ENCODE measurements at regions of chr17 and their contacts with region 1.

Region 1: GRCh38 chr17:41548844-41549595 is 20.9 kb upstream of the KRT19 start:
- H3K4me3 ChIP-seq: no peak overlapping the region
- H3K27ac ChIP-seq: peak overlapping the region; percentile 38
- H3K4me1 ChIP-seq: no peaks in the 10 kb centered on the region
- CTCF ChIP-seq: peak; percentile 80

Region 2: DNA sequence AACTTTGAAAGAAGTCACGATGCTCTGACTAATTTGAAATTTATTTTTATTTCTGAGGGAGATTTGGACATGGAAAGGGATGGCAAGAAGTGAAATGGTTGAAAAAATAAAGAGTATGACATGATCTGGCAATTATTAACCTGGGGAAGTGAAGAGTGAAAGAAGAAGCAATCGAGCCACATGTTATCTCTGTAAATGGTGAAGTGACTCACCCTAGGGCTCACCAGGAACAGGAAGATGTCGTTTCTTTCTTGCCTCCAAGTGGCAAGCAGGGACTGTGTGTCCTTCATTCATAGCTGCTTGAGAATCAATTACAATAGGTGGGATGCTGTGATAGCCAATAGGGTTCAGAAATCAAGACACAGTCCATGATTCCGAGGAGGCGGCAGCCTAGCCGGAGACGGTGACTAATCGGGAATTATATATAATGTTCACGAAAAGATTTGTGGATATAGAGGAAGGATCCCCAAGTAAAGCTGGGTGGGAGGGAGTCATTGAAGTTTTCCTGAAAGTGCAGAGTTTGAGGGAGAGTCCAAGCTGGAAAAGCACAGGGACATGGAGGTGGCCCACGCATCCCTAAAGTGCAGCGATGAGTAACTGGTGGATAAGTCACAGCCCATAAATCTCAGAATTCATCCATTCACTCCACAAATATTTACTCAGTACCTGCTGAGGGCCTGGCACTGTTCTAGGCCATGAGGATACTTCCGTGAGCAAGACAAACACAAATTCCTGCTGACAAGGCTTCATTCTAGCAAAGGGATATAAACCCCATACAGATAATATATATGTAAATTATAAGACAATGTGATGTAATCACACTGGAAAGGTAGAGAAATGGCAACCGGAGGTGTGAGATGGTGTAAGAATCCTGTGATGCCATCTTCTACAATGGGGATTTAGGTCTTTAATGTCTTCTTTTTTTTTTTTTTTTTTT is 645.6 kb before region 1 on chr17:
- CTCF ChIA-PET with region 1: interaction called, 25 read pairs
- POLR2A ChIA-PET with region 1: no interaction called
- H3K4me3 ChIP-seq: no peak overlapping the region
- H3K27ac ChIP-seq: peak overlapping the region; percentile 63
- H3K4me1 ChIP-seq: peaks cover 27% of the 10 kb centered on the region
- CTCF ChIP-seq: no peak

Region 3: GRCh38 chr17:41307648-41308047 is 241.4 kb before region 1 on chr17:
- CTCF ChIA-PET with region 1: no interaction called
- POLR2A ChIA-PET with region 1: no interaction called
- H3K4me3 ChIP-seq: no peak overlapping the region
- H3K27ac ChIP-seq: no peak overlapping the region
- H3K4me1 ChIP-seq: no peaks in the 10 kb centered on the region
- CTCF ChIP-seq: no peak

Region 4: DNA sequence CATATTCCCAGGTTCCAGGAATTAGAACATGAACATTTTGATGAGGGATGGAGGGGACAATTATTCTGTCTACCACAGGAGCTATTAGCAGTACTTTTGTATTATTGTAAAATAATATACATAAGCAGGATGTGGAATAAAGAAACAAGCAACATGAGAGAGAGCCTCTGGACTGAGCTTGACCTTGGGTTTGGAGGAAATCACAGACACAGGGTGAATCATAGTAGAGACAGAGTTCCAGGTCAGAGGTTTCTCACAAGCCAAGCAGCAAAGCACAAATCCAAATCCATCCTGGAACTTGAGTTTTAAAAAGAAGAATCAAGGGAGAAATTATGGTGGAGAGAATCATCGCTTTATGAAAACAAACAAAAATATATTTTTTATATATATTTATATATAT is 156.7 kb before region 1 on chr17:
- CTCF ChIA-PET with region 1: interaction called, 13 read pairs
- POLR2A ChIA-PET with region 1: no interaction called
- H3K4me3 ChIP-seq: no peak overlapping the region
- H3K27ac ChIP-seq: no peak overlapping the region
- H3K4me1 ChIP-seq: peaks cover 2% of the 10 kb centered on the region; the same call in 1 of the 2 replicates
- CTCF ChIP-seq: no peak

Region 5: GRCh38 chr17:41505809-41506731 is 43.0 kb before region 1 on chr17:
- CTCF ChIA-PET with region 1: interaction called, 47 read pairs
- POLR2A ChIA-PET with region 1: no interaction called
- H3K4me3 ChIP-seq: no peak overlapping the region
- H3K27ac ChIP-seq: no peak overlapping the region
- H3K4me1 ChIP-seq: peaks cover 19% of the 10 kb centered on the region
- CTCF ChIP-seq: no peak

Region 6: GRCh38 chr17:41559548-41559947 is 10.5 kb after region 1 on chr17:
- CTCF ChIA-PET with region 1: interaction called, 75 read pairs
- POLR2A ChIA-PET with region 1: no interaction called
- H3K4me3 ChIP-seq: no peak overlapping the region
- H3K27ac ChIP-seq: no peak overlapping the region
- H3K4me1 ChIP-seq: no peaks in the 10 kb centered on the region
- CTCF ChIP-seq: no peak

Region 7: DNA sequence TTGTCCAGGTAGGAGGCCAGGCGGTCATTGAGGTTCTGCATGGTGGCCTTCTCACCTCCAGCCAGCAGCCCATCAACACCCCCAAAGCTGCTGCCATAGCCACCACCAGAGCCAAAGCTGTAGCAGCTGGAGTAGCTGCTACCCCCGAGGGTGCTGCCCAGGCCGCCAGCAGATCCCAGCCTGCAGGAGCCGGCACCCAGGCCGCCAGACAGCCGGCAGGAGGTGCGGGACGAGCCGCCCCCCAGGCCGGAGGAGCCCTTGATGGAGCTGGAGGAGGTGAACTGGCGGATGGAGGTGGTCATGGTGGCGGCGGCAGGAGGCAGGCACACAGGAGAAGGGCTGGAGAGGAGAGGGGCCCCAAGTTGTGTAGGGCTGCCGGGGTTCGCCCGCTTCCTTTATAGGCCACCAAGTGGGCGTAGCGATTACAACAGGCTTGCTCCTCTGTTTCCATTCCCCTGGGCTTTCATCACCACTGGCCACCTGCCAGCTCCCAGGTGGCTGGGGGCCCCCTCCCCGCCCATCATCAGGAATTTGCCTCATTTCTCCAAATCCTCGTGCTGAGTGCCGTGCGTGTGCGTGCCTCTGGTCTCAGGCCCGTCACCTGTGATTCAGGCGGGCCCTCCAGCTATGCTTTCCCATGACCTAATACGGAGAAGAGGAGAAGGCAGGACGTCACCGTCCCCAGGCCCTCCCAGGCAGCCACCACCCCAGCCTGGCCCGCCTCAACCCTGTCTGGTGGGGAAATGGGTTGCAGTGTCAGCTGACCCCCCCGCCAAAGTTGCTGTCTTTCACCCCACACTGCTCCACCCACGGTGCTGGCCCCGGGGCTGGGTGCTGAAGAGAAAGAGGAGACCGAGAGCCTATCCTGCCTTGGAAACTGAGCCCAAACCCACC is 75.4 kb after region 1 on chr17 and contains the start of gene KRT17:
- CTCF ChIA-PET with region 1: interaction called, 14 read pairs
- POLR2A ChIA-PET with region 1: no interaction called
- H3K4me3 ChIP-seq: peak within 1 kb of the TSS; percentile 26
- H3K27ac ChIP-seq: no peak within 1 kb of the TSS
- H3K4me1 ChIP-seq: peaks cover 2% of the 10 kb centered on the region; the same call in 1 of the 2 replicates
- CTCF ChIP-seq: no peak

Region 8: DNA sequence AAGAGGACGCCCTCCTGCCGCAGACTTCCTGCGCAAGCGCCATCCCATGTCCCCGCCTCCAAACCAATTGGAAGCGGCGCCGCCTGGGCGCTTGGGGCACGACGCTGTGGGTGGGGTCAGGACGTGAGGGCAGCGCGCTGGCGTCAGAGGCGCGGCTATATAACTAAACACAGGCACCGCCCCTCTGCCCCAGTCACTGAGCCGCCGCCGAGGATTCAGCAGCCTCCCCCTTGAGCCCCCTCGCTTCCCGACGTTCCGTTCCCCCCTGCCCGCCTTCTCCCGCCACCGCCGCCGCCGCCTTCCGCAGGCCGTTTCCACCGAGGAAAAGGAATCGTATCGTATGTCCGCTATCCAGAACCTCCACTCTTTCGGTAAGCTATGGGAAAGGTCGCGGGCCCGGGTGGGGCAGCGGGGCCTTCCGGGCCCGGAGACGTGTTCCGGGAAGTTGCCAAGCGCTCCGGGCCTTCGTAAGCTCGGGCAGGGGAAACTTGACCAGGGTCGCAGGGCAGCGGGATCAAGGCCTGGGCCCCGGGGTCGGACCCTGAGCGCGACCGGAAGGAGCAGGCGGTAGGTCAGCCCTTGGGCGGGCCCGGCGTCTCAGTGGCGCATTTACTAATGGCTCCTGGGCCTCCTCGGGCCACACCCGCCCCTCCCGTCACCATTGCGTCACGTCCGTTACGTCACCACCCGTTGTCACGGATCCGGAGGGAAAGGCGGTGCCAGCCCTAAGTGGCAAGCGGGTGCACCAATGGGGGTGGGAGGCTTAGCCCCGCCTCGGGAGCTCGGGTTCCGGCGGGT is 139.9 kb after region 1 on chr17 and contains the start of gene EIF1:
- CTCF ChIA-PET with region 1: interaction called, 3 read pairs
- POLR2A ChIA-PET with region 1: interaction called, 10 read pairs
- H3K4me3 ChIP-seq: peak within 1 kb of the TSS; percentile 96
- H3K27ac ChIP-seq: peak within 1 kb of the TSS; percentile 89
- H3K4me1 ChIP-seq: no peaks in the 10 kb centered on the region
- CTCF ChIP-seq: 0 out of 2 replicates have a peak, but pooled peaks have one; percentile 17